Right cardiac atrium (tissue), 5 donors: ENCODE measurements at regions of chr2 and their contacts with region 1.

Region 1: GRCh38 chr2:75608684-75609333 is 37.8 kb upstream of the MRPL19 start:
- DNase-seq: peak; percentile 46 to 76 (median 75)
- ATAC-seq: peak; percentile 76 to 81
- H3K4me3 ChIP-seq: no peak overlapping the region
- H3K27ac ChIP-seq: no peak overlapping the region
- H3K4me1 ChIP-seq: no peaks in the 10 kb centered on the region
- H3K27me3 ChIP-seq: no peaks in the 10 kb centered on the region

Region 2: DNA sequence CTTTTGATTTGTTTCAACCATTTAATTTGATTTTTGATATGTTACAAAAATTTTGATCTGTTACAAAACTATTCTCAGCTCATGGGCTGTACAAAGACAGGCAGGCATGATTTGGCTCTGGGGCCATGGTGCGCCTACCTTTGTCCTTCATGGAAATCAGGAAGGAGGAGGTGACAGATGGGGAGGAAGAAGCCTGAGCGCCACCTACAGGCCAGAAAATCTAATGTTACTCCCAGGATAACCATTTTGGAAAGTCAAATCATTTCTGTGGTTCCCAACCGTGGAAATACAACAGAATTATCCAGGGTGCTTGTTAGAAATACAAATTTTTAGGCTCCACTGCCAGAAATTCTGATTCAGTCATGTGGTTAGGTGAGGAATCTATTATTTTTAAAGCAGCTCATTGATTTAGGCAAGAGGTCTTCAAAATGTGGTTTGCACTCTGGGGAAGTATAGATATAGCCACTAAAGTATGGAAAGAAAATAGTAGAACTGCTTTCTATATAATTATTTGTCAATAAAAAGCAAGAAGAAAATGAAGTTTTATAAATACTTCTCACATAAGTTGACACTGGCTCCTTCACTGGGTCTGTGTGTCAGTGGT is 142.0 kb before region 1 on chr2:
- intact Hi-C with region 1: loop called in 3 of 4 experiments (anchors 5 to 10 kb)
- DNase-seq: peak in 1 of 3 donors; percentile 10
- ATAC-seq: no peak
- H3K4me3 ChIP-seq: no peak overlapping the region
- H3K27ac ChIP-seq: no peak overlapping the region
- H3K4me1 ChIP-seq: no peaks in the 10 kb centered on the region
- H3K27me3 ChIP-seq: no peaks in the 10 kb centered on the region

Region 3: GRCh38 chr2:75476761-75477160 is 132.0 kb before region 1 on chr2:
- intact Hi-C with region 1: loop called in 1 of 4 experiments (anchors 10 kb)
- DNase-seq: no peak
- ATAC-seq: no peak
- H3K4me3 ChIP-seq: no peak overlapping the region
- H3K27ac ChIP-seq: no peak overlapping the region
- H3K4me1 ChIP-seq: no peaks in the 10 kb centered on the region
- H3K27me3 ChIP-seq: no peaks in the 10 kb centered on the region